ENCODE measurements at regions of chr1 and their contacts with region 1.

Region 1: DNA sequence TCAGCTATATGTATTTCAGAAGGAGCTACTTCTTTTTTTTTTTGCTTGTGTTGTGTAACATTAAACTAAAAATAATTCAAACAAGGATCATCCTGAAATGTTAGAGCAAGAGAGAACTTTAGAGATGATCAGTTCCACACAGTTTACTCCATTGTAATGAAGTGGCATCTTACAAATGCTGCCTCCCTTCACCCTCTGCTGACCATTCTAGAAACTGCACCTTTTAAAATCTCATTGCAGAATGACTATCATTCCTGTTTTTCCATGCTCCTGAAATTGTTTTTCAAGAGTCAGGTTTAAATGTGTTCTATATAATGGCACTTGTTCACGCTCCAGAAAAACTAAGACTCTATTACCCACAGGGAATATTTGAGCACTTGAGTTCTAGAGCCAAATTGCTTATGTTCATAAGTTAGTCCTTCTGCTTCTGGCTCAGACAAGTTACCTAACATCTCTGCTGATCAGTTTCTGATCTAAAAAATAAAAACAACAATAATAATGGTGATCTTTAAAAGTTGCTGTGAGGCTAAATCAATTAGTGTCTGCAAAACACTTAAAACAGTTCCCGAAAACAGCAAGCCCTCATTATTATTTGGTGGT is 21.5 kb upstream of the SLC44A5 start:
- DNase-seq: no peak
- H3K4me3 ChIP-seq: no peak overlapping the region
- H3K27ac ChIP-seq: no peak overlapping the region
- H3K27me3 ChIP-seq: no peaks in the 10 kb centered on the region
- CTCF ChIP-seq: peak; percentile 83

Region 2: DNA sequence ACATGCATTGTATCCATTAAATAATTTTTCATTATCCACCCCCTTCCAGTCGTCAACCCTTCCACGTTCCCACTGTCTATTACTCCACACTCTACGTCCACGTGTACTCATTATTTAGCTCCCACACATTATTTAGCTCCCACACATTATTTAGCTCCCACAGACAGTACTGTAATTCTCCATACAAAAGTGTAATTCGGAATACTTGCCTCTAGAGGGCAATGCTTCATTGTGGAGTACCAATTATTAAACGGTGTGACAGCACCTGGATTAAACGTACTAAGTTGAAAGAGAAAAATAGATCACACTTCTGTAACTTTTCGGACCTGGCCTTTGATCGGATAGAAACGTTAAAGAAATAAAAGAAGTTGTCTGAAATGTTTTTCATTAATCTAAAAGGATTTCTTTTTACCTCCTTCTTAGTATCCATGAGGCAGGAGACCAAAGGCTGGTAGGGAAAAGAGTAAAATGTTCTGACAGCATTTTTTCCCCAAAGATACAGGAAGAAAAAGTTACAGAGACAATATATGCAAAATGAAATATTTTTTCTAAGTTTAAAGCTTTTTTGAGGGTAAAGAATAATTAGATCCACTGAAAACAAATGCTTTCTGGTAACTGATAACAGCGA is 399.0 kb before region 1 on chr1:
- CTCF ChIA-PET with region 1: interaction called, 19 read pairs
- POLR2A ChIA-PET with region 1: no interaction called
- DNase-seq: no peak
- H3K4me3 ChIP-seq: no peak overlapping the region
- H3K27ac ChIP-seq: no peak overlapping the region
- H3K27me3 ChIP-seq: no peaks in the 10 kb centered on the region
- CTCF ChIP-seq: peak; percentile 66

Region 3: DNA sequence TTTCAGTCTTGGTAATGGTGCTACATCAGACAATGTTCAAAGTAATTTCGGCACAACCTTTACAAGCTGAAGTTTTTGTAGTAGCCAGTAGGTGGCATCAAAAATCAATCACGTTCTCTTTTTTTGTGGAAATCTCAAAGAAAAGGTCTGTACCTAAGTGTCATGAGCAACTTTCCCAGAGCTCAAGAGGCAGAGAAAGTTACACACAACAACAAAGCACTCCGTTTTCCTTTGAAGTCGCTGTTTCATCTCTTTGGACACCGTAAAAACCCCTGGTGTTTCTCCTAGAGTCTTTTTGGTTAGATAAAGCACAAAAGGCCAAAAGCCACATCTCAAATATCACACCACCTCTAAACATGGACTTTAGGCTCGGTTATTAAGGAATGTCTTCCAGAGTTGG is 366.7 kb before region 1 on chr1:
- CTCF ChIA-PET with region 1: interaction called, 41 read pairs
- POLR2A ChIA-PET with region 1: no interaction called
- DNase-seq: no peak
- H3K4me3 ChIP-seq: no peak overlapping the region
- H3K27ac ChIP-seq: no peak overlapping the region
- H3K27me3 ChIP-seq: no peaks in the 10 kb centered on the region
- CTCF ChIP-seq: peak; percentile 61

Region 4: DNA sequence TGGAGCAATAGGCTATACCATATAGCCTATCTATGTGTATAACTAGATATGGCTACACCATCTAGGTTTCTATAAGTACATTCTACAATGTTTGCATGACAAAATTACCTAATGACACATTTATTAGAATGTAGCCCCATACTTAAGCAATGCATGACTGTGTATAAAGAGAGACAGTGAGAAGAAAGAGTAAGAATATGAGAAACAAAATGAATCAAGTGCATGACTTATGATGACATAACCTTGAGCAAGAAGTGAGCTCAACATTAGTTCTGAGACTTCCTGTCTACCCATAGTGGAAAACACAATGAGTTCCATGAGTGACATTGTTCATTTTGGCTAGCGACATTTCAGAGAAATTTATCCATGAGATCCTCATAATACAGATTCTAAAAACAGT is 31.7 kb before region 1 on chr1:
- CTCF ChIA-PET with region 1: no interaction called
- POLR2A ChIA-PET with region 1: no interaction called
- DNase-seq: no peak
- H3K4me3 ChIP-seq: no peak overlapping the region
- H3K27ac ChIP-seq: no peak overlapping the region
- H3K27me3 ChIP-seq: no peaks in the 10 kb centered on the region
- CTCF ChIP-seq: no peak

Region 5: DNA sequence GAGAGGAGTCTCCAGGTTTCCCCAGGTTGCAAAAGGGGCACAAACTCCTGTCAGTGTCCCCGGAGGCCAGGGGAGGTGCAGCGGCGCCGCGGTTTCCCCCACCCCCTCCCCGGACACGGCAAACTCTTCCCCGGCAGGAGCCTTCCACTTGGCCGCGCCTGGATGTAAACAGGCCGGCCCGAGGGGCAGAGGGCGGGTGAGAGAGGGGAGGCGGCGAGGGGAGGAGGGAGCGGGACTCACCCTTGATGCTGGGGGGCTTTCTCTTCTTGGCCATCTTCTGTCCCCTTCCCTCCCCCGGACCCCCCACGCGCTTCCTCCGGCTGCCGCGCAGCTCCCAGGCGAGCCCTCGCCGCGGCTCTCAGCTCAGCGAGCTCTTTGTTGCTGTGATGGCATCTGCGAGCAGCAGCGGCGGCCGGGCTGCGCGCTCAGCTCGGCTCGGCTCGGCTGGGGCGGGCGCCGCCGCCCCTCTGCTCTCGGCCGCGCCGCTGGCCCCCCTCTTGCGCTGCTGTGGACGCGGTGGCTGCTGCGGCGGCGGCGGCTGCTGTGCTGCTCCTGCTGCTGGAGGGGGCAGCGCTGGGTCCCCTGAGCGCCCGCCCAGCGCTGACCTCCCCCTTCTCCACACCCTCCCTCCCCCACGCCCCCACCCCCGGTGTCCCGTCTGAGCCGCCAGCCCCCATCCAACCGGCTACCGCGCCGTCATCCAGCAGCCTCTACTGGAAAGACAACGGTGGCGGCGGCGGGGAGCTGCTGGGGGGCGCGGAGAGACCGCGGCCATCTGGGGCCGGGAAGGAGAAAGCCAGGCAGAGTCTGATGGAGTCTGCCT is 16.6 kb before region 1 on chr1:
- CTCF ChIA-PET with region 1: interaction called, 18 read pairs
- POLR2A ChIA-PET with region 1: no interaction called
- DNase-seq: no peak
- H3K4me3 ChIP-seq: peak overlapping the region; percentile 58
- H3K27ac ChIP-seq: no peak overlapping the region
- H3K27me3 ChIP-seq: peaks cover 42% of the 10 kb centered on the region
- CTCF ChIP-seq: no peak

Region 6: GRCh38 chr1:75643460-75643859 is 11.0 kb after region 1 on chr1:
- CTCF ChIA-PET with region 1: interaction called, 10 read pairs
- POLR2A ChIA-PET with region 1: no interaction called
- DNase-seq: no peak
- H3K4me3 ChIP-seq: no peak overlapping the region
- H3K27ac ChIP-seq: no peak overlapping the region
- H3K27me3 ChIP-seq: no peaks in the 10 kb centered on the region
- CTCF ChIP-seq: no peak

Measured in AG04450 (cell line).